BJ (cell line): ENCODE measurements at regions of chr4 and their contacts with region 1.

Region 1: DNA sequence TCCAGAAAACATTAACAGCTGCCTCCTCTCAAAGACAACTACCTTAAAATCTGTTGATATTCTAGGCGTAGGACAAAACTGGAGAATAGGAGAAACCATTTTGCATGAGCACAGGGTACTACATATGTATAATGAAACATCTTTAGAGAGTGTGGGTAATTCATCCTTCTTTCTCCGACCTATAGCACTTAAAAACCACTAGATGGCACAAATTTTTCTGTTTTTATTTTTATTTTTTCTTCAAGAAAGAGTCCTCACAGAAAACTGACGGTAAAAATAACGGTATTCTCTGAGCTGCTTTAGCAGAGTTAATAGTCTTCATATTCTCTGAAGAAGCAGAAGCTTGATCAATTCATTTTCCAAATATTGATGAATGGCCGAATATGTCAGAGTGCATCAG is 14.6 kb downstream of the SMIM31 start:
- DNase-seq: no peak
- H3K4me3 ChIP-seq: no peak overlapping the region
- H3K27me3 ChIP-seq: no peaks in the 10 kb centered on the region
- CTCF ChIP-seq: peak; percentile 44

Region 2: GRCh38 chr4:164606478-164606877 is 162.0 kb before region 1 on chr4:
- CTCF ChIA-PET with region 1: no interaction called
- POLR2A ChIA-PET with region 1: no interaction called
- DNase-seq: no peak
- H3K4me3 ChIP-seq: no peak overlapping the region
- H3K27me3 ChIP-seq: no peaks in the 10 kb centered on the region
- CTCF ChIP-seq: no peak

Region 3: GRCh38 chr4:164779811-164780216 is 11.3 kb after region 1 on chr4:
- CTCF ChIA-PET with region 1: interaction called, 27 read pairs
- POLR2A ChIA-PET with region 1: no interaction called
- DNase-seq: no peak
- H3K4me3 ChIP-seq: no peak overlapping the region
- H3K27me3 ChIP-seq: no peaks in the 10 kb centered on the region
- CTCF ChIP-seq: peak; percentile 86

Region 4: GRCh38 chr4:165096776-165097175 is 328.3 kb after region 1 on chr4:
- CTCF ChIA-PET with region 1: interaction called, 20 read pairs
- POLR2A ChIA-PET with region 1: no interaction called
- DNase-seq: no peak
- H3K4me3 ChIP-seq: no peak overlapping the region
- H3K27me3 ChIP-seq: no peaks in the 10 kb centered on the region
- CTCF ChIP-seq: peak; percentile 61